ENCODE measurements at regions of chr17 and their contacts with region 1.

Region 1: GRCh38 chr17:64968652-64969501 is 49.6 kb upstream of the LRRC37A3 start:
- DNase-seq: peak; percentile 20
- ATAC-seq: peak; percentile 66
- H3K4me3 ChIP-seq: no peak overlapping the region
- H3K27ac ChIP-seq: peak overlapping the region; percentile 45
- H3K4me1 ChIP-seq: peaks cover 42% of the 10 kb centered on the region
- H3K27me3 ChIP-seq: no peaks in the 10 kb centered on the region
- CTCF ChIP-seq: no peak
- EP300 ChIP-seq: no peak
- POLR2A ChIP-seq: no peak
- RAD21 ChIP-seq: no peak

Region 2: DNA sequence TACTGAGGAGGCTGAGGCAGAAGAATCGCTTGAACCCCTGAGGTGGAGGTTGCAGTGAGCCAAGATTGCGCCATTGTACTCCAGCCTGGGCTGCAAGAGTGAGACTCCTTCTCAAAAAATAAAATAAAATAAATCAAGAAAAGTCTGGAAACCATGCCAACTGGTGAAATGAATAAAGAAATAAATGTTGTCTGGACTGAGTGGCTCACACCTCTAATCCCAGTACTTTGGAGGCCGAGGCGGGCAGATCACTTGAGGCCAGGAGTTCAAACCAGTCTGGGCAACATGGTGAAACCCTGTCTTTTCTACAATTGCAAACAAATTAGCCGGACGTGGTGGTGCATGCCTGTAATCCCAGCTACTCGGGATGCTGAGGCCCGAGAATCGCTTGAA is 48.9 kb before region 1 on chr17:
- CTCF ChIA-PET with region 1: interaction called, 3 read pairs
- POLR2A ChIA-PET with region 1: no interaction called
- RAD21 ChIA-PET with region 1: interaction called, 5 read pairs
- SMC1A ChIA-PET with region 1: interaction called, 3 read pairs
- in situ Hi-C with region 1: no loop called
- intact Hi-C with region 1: loop called (anchors 2 kb)
- DNase-seq: no peak
- ATAC-seq: peak; percentile 24
- H3K4me3 ChIP-seq: peak overlapping the region; percentile 77; the same call in 1 of the 2 replicates
- H3K27ac ChIP-seq: peak overlapping the region; percentile 76
- H3K4me1 ChIP-seq: peaks cover 10% of the 10 kb centered on the region
- H3K27me3 ChIP-seq: no peaks in the 10 kb centered on the region
- CTCF ChIP-seq: no peak
- EP300 ChIP-seq: no peak
- POLR2A ChIP-seq: no peak
- RAD21 ChIP-seq: no peak

Region 3: DNA sequence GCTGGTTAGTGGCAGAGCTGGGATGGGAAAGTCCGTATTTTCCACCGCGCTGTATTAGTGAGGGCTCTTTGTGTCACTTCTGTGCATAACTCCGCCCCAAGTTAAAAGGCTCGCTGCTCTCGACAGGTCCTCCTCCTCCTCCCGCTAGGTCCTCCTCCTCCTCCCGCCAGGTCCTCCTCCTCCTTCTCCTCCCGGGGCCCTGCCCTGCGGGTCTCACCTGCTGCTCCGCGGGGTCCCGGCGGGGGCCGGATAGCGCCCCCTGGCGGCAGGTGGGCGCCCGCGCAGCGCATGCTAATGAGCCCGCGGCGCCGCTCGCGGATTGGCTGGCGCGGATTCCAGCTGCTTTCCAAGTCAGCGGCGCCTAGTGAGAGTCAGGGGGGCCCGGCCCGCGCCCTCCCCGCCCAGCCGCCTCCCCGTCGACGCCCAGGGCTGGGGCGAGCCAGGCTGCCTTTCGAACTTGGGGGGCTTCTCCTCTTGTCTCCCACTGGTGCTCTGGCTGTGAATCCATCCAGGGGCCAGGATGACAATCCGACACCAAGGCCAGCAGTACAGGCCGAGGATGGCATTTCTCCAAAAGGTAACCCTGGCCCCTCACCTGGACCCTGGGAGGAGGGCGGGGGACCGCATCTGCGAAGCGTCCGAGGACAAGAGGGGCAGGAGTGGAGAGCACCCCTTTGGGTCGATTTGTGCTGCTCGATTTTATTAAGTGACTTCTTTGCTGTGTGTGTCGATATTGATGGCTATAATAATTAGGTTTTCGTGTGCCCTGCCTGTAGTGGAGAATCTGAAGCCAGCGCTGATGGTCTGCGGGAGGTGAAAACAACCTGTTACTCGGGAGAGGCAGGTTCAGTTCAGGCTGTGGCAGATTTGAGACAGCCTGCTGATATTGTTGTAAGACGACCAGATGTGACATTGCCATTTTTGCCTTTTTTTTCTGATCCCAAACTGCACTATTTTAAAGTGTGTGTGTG is 168.4 kb after region 1 on chr17 and contains the start of gene RGS9:
- CTCF ChIA-PET with region 1: interaction called, 11 read pairs
- POLR2A ChIA-PET with region 1: no interaction called
- RAD21 ChIA-PET with region 1: interaction called, 4 read pairs
- SMC1A ChIA-PET with region 1: interaction called, 4 read pairs
- in situ Hi-C with region 1: no loop called
- intact Hi-C with region 1: no loop called
- DNase-seq: peak; percentile 38
- ATAC-seq: peak; percentile 98
- H3K4me3 ChIP-seq: peak within 1 kb of the TSS; percentile 66
- H3K27ac ChIP-seq: 0 out of 2 replicates have a peak within 1 kb of the TSS, but pooled peaks have one; percentile 21
- H3K4me1 ChIP-seq: peaks cover 8% of the 10 kb centered on the region
- H3K27me3 ChIP-seq: no peaks in the 10 kb centered on the region
- CTCF ChIP-seq: peak; percentile 83 to 92 (median 89)
- EP300 ChIP-seq: no peak
- POLR2A ChIP-seq: no peak
- RAD21 ChIP-seq: peak; percentile 77
- polyA plus RNA-seq, gene RGS9: 3.0 to 4.1 TPM

Measured in GM12878 (cell line).